ENCODE measurements at regions of chr1 and their contacts with region 1.

Region 1: GRCh38 chr1:11719313-11720032 is 16.5 kb upstream of the AGTRAP start:
- DNase-seq: peak; percentile 71 to 93 (median 84)
- ATAC-seq: peak; percentile 90 to 92
- H3K4me3 Mint-ChIP-seq: peak overlapping the region; percentile 70 to 93 (median 87)
- H3K27ac Mint-ChIP-seq: peak overlapping the region; percentile 84 to 99 (median 92)
- H3K4me1 Mint-ChIP-seq: peaks cover 11 to 21% (median 15%) of the 10 kb centered on the region in 4 donors
- H3K27me3 Mint-ChIP-seq: no peaks in the 10 kb centered on the region

Region 2: GRCh38 chr1:11522400-11523235 is 196.9 kb before region 1 on chr1:
- POLR2A ChIA-PET with region 1: no interaction called
- DNase-seq: peak in 1 of 10 donors; percentile 52
- ATAC-seq: no peak
- H3K4me3 Mint-ChIP-seq: no peak overlapping the region
- H3K27ac Mint-ChIP-seq: no peak overlapping the region
- H3K4me1 Mint-ChIP-seq: peaks cover 0 to 6% (median 0%) of the 10 kb centered on the region in 4 donors
- H3K27me3 Mint-ChIP-seq: no peaks in the 10 kb centered on the region

Region 3: DNA sequence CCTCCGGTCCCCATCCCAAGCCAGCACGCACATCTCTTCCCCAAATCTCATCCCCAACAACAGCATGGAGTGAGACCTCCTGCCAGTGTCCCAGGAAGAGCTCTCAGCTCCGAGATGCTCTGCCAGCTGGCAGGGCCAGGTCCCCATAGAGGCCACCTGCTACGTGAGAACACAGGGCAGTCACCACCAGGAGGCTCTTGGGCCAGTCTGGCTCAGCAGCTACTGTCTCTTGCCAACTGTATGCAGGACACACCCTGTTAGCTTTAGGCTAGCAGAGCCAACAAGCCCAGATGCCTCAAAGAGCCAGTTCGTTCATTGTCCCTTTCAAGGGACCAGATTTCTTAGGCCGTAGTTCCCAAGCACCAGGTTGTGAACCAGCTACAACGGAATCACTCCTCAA is 102.2 kb before region 1 on chr1:
- POLR2A ChIA-PET with region 1: no interaction called
- DNase-seq: no peak
- ATAC-seq: no peak
- H3K4me3 Mint-ChIP-seq: no peak overlapping the region
- H3K27ac Mint-ChIP-seq: no peak overlapping the region
- H3K4me1 Mint-ChIP-seq: no peaks in the 10 kb centered on the region
- H3K27me3 Mint-ChIP-seq: peaks cover 3 to 50% (median 12%) of the 10 kb centered on the region in 5 donors

Region 4: DNA sequence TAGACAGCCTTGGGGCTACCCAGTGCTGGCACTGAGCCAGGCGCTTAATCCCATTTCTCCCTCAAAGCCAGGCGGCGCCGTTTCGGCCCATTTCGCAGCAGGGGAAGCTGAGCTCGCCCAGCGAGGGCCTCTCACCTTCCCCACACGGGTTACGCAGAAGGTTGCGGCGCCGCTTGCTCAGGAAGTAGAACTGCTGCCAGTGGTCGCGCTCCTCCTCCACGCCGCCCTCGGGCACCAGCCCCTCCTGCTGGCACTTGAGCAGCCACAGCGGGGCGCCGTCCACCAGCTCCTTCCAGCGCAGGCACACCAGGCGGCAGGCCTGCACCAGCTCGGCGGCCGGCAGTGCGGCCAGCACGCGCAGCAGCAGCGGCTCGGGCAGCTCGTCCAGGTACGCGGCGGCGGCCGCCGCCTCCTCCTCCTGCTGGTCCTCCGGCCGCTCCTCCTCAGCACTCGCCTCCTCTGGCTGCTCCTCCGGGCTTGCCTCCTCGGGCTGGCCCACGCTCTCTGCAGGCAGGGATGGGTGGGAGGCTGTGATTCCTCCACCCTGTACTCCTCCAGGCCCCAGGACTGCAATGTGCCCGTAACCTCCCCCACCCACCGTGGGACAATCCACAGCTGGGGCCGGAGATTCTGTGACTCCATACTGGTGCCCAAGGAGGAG is 69.0 kb before region 1 on chr1:
- POLR2A ChIA-PET with region 1: interaction called, 70 read pairs
- DNase-seq: peak; percentile 64 to 87 (median 74)
- ATAC-seq: peak; percentile 69 to 76
- H3K4me3 Mint-ChIP-seq: peak overlapping the region; percentile 75 to 90 (median 84)
- H3K27ac Mint-ChIP-seq: peak overlapping the region in 9 of 10 donors; percentile 27 to 87 (median 71)
- H3K4me1 Mint-ChIP-seq: peaks cover 12 to 34% (median 29%) of the 10 kb centered on the region in 4 donors
- H3K27me3 Mint-ChIP-seq: no peaks in the 10 kb centered on the region

Region 5: GRCh38 chr1:11658308-11658941 is 61.0 kb before region 1 on chr1:
- POLR2A ChIA-PET with region 1: interaction called, 70 read pairs
- DNase-seq: no peak
- ATAC-seq: no peak
- H3K4me3 Mint-ChIP-seq: no peak overlapping the region
- H3K27ac Mint-ChIP-seq: no peak overlapping the region
- H3K4me1 Mint-ChIP-seq: peaks cover 0 to 22% (median 11%) of the 10 kb centered on the region in 4 donors
- H3K27me3 Mint-ChIP-seq: no peaks in the 10 kb centered on the region

Region 6: DNA sequence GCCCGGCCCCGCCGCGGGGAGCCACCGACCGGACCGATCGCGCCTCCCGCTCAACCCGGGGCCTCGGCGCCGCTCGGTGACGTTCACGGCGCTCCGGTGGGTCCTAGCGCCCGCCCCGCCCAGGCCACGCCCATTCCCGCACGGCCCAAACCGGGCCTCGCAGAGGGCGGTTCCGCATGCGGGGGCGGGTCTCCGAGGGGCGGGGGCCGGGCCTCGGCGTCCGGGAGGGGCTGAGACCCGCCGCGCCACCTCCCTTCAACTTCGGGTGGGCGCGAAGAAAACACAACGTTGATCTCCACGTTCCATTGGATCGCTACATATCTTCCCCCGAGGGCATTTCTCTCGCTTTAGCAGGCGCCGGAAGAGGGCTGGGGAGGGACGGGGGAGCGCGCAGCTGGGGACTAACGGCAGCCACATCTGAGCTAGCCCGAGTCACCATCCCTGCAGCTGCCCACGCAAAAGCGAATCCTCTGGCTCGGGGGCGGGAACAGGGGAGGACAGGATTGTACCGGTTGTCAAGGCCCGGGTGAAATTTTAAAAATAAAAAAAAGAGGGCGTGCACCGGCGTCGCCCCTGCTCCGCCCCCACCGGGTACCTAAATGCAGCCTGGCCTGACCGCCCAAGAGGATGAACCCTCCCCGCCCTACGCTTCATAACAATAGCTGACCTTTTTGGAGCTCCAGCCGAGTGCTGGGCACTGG is 38.3 kb before region 1 on chr1 and contains the start of gene MAD2L2:
- POLR2A ChIA-PET with region 1: interaction called, 30 read pairs
- DNase-seq: peak; percentile 82 to 95 (median 88)
- ATAC-seq: peak; percentile 86
- H3K4me3 Mint-ChIP-seq: peak within 1 kb of the TSS; percentile 85 to 99 (median 92)
- H3K27ac Mint-ChIP-seq: peak within 1 kb of the TSS; percentile 61 to 95 (median 92)
- H3K4me1 Mint-ChIP-seq: peaks cover 4 to 25% (median 16%) of the 10 kb centered on the region in 4 donors
- H3K27me3 Mint-ChIP-seq: peaks cover 0 to 4% (median 2%) of the 10 kb centered on the region in 5 donors
- polyA plus RNA-seq, gene MAD2L2: 52.2 to 66.1 (median 54.2) TPM

Region 7: DNA sequence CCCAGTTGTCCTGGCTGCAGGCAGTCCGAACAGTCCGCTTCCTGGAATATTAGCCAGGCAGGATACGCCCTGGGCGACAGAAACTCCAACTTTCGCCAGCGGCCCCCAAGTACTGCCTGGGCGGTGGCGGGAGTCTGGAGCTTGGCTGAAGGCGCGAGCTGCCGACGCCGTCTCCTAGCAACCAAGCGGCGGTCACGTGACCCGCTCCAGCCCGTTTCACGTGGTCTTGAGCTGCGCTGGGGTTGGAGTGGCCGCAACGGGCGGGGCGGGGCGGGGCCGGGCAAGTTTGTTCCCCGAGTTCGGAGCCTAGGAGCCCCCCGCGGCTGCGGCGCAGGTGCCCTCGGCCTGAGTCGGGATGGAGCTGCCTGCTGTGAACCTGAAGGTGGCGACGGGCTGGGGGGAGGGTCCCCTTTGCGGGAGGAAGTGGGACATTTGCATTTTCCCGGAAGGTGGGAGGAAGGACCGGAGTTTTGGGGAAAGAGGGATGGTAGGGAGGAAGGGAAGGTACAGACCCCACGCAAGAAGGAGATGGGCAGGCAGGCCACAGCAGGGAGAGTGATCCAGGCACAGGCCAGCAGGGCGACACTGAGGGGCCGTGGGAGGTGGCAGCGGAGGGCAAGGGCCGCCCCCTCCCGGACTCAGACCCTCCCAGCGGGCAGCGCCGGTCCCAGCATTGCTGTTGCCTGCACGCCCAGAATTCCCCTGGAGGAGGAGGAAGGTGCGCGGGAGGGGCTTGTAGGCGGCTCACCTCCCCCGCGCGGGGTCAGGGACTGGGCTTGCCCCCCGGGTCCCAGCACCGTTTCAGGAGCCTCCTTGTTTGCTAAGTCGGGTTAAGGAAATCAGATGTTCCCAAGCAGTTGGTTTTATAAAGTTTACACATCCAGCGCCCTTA is 16.6 kb after region 1 on chr1 and contains the start of gene AGTRAP:
- POLR2A ChIA-PET with region 1: interaction called, 28 read pairs
- DNase-seq: peak; percentile 75 to 92 (median 78)
- ATAC-seq: peak; percentile 72 to 78
- H3K4me3 Mint-ChIP-seq: peak within 1 kb of the TSS; percentile 87 to 98 (median 94)
- H3K27ac Mint-ChIP-seq: peak within 1 kb of the TSS; percentile 39 to 97 (median 84)
- H3K4me1 Mint-ChIP-seq: peaks cover 36 to 81% (median 79%) of the 10 kb centered on the region in 4 donors
- H3K27me3 Mint-ChIP-seq: no peaks in the 10 kb centered on the region
- polyA plus RNA-seq, gene AGTRAP: 57.3 to 106 (median 90.0) TPM

Region 8: GRCh38 chr1:11753555-11754208 is 34.2 kb after region 1 on chr1:
- POLR2A ChIA-PET with region 1: no interaction called
- DNase-seq: no peak
- ATAC-seq: no peak
- H3K4me3 Mint-ChIP-seq: no peak overlapping the region
- H3K27ac Mint-ChIP-seq: peak overlapping the region in 5 of 10 donors; percentile 32 to 86 (median 41)
- H3K4me1 Mint-ChIP-seq: peaks cover 6 to 18% (median 11%) of the 10 kb centered on the region in 4 donors
- H3K27me3 Mint-ChIP-seq: peaks cover 0 to 1% (median 0%) of the 10 kb centered on the region in 5 donors